Heart left ventricle (tissue), 16 donors: ENCODE measurements at regions of chr12 and their contacts with region 1.

Region 1: DNA sequence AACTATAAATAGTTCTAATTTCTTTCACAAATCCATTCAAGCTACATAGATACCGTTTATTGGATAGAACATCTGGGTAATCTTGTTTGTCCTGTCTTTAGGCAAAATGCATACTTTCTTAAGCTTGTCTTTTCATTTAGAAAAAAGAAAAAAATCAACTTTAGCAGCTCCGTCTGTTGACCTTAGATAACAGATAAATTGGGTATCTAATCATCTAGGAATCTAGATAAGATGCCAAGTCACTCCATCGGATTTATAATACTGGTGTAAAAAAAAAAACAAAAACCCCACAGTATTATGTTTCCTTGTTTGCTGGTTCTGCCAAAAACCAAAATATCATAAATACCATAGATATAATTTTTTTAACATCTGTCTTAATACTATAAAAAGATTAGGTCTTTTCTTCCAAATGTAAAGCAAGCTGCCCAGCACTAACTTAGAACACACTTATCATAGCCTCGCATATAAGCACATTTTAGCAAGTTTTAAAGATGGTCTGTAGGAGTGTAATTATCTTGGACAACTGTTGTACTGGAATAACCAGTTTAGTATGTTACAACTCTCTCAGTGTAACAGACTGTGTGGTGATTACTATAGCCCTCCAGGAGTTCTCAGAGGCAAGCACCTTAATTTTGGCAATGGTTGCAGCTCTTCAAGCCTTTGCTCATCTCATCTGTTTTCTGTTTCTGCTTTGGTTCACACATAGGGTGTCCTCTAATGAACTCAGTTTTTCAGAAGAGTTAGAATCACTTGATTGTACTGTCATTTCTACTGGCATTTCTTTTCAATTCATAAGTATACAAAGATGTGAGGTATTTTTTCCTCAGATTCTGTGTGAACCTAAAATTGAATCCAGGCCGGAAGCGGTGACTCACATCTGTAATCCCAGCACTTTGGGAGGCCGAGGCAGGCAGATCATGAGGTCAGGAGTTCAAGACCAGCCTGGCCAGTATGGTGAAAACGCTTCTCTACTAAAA is 83.1 kb downstream of the ANO6 start:
- DNase-seq: no peak
- ATAC-seq: peak in 3 of 4 donors; percentile 52 to 58 (median 54)
- H3K4me3 ChIP-seq: no peak overlapping the region
- H3K27ac ChIP-seq: peak overlapping the region in 11 of 12 donors; percentile 1 to 64 (median 21)
- H3K4me1 ChIP-seq: peaks cover 0 to 66% (median 34%) of the 10 kb centered on the region in 12 donors
- H3K27me3 ChIP-seq: no peaks in the 10 kb centered on the region
- CTCF ChIP-seq: no peak
- POLR2A ChIP-seq: no peak

Region 2: DNA sequence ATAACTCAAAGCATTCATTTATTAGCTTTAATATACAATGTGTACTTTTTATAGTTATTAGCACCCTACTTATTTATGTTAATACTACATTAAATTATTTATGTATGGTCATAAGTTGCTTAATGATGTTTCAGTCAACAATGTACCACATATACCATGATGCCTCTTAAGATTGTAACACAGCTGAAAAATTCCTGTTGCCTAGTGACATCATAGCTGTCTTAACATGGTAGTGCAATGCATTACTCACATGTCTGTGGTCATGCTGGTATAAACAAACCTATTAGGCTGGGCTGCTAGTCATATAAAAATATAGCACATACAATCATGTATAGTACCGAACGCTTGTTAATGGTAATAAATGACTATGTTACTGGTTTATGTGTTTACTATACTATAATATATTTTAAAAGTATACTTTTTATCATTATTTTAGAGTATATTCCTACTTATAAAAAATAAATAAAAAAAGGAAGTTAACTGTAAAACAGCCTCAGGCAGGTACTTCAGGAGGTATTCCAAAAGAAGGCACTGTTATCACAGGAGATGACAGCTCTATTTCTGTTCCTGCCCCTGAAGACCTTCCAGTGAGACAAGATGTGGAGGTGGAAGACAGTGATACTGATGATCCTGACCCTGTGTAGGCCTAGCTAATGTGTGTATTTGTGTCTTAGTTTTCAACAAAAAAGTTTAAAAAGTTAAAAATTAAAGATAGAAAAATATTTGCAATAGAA is 37.5 kb after region 1 on chr12:
- intact Hi-C with region 1: loop called in 1 of 10 experiments (anchors 5 kb)
- DNase-seq: no peak
- ATAC-seq: no peak
- H3K4me3 ChIP-seq: no peak overlapping the region
- H3K27ac ChIP-seq: peak overlapping the region in 2 of 12 donors; percentile 2 to 88
- H3K4me1 ChIP-seq: peaks cover 0 to 37% (median 14%) of the 10 kb centered on the region in 12 donors
- H3K27me3 ChIP-seq: no peaks in the 10 kb centered on the region
- CTCF ChIP-seq: no peak
- POLR2A ChIP-seq: no peak

Region 3: DNA sequence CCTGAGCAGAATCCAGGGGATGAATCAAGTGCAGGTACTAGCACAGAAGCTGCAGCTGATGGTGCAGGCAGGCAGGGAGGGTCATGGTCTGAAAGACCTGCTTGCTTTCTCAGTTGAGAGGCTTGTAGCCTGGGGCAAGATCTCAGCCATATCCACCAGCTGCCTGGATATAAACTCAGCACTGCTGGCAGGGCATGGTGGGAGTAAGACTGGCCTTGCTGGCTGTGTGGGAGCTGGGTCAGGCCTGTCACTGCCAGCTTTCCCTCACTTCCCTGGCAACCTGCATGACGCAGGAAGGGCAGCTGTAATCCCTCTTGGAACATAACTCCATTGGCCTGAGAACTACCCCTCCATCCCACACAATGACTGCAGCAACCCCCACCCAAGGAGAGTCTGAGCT is 147.0 kb after region 1 on chr12:
- intact Hi-C with region 1: no loop called
- DNase-seq: no peak
- ATAC-seq: peak in 2 of 4 donors; percentile 62 to 77
- H3K4me3 ChIP-seq: no peak overlapping the region
- H3K27ac ChIP-seq: no peak overlapping the region
- H3K4me1 ChIP-seq: no peaks in the 10 kb centered on the region
- H3K27me3 ChIP-seq: no peaks in the 10 kb centered on the region
- CTCF ChIP-seq: no peak
- POLR2A ChIP-seq: no peak